ENCODE measurements at regions of chr22 and their contacts with region 1.

Region 1: GRCh38 chr22:33579448-33580093 is 340.7 kb downstream of the LARGE1 start:
- DNase-seq: peak; percentile 42 to 70 (median 55)
- H3K4me3 ChIP-seq: no peak overlapping the region
- H3K27ac ChIP-seq: no peak overlapping the region
- H3K4me1 ChIP-seq: no peaks in the 10 kb centered on the region
- H3K27me3 ChIP-seq: peaks cover 0 to 2% (median 0%) of the 10 kb centered on the region in 5 experiments

Region 2: DNA sequence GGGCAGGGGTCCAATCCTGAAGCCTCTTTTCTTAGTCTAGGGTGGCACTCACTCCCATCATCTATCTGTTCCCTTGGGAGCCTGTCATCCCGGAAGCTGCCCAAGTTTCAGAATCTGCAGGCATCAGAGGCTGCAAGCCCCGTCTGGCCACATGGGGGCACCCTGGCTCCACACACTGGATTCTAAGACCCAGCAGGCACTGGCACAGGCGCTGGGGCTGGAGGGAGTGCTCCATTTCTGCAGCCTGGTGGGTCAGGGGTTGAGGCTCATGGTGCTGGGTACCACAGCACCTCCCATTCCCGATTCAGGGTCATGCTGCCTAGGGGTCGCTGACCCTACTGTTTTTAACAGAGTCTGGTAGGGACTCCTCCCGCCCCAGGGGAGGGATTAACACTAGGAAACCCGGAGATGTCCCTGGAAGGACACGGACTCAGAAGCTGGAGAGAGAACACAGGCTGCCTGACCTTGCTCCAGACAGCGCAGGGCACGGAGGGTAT is 277.5 kb before region 1 on chr22:
- CTCF ChIA-PET with region 1: interaction called, 23 read pairs
- POLR2A ChIA-PET with region 1: no interaction called
- DNase-seq: peak; percentile 49 to 65 (median 59)
- H3K4me3 ChIP-seq: no peak overlapping the region
- H3K27ac ChIP-seq: no peak overlapping the region
- H3K4me1 ChIP-seq: peaks cover 0 to 8% (median 2%) of the 10 kb centered on the region in 4 experiments
- H3K27me3 ChIP-seq: no peaks in the 10 kb centered on the region

Region 3: GRCh38 chr22:33519071-33519973 is 60.2 kb before region 1 on chr22:
- CTCF ChIA-PET with region 1: interaction called, 47 read pairs
- POLR2A ChIA-PET with region 1: no interaction called
- DNase-seq: peak; percentile 69 to 81 (median 74)
- H3K4me3 ChIP-seq: no peak overlapping the region
- H3K27ac ChIP-seq: no peak overlapping the region
- H3K4me1 ChIP-seq: peaks cover 0 to 8% (median 3%) of the 10 kb centered on the region in 4 experiments
- H3K27me3 ChIP-seq: no peaks in the 10 kb centered on the region

Measured in common myeloid progenitor, CD34-positive (primary cell).